Activated CD4-positive, alpha-beta memory T cell treated with anti-CD3 and anti-CD28 coated beads for 36 hours (primary cell): ENCODE measurements at regions of chr3 and their contacts with region 1.

Region 1: GRCh38 chr3:183468424-183468823 is 40.0 kb upstream of the MCF2L2 start:
- DNase-seq: no peak
- H3K4me3 Mint-ChIP-seq: no peak overlapping the region
- H3K27ac Mint-ChIP-seq: peak overlapping the region; percentile 79
- H3K4me1 Mint-ChIP-seq: peaks cover 20% of the 10 kb centered on the region
- H3K27me3 Mint-ChIP-seq: no peaks in the 10 kb centered on the region

Region 2: DNA sequence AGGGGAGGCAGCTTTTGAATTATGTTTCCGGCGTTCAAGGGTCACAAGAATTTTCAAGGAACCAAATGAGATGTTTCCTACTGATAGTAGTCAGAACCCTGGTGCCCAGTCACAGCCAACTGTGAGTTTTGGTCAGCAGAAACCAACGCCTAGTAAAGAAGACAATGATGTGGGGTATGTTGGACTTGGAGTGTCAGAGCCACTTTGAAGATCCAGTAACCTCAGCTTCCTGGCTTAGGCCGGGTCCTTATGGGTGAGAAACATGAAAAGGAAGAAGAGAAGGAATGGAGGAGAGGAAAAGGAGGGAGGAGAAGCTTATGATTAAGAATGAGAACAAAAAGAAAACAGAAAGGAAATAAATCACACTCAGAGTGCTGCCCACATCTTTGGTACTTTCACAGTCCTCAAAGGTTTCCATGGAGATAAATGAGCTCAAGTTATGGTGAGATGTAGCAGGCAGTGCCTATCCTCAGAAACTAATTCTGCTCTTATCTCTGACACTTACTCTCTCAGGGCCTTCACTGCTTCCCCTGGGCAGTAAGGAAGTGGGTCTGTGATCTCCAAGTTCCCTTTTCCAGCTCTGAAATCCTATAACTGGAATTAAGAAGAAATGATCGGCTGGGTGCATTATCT is 38.0 kb before region 1 on chr3:
- CTCF ChIA-PET with region 1: interaction called, 3 read pairs
- POLR2A ChIA-PET with region 1: interaction called, 7 read pairs
- intact Hi-C with region 1: loop called (anchors 1 kb)
- DNase-seq: peak; percentile 66
- H3K4me3 Mint-ChIP-seq: peak overlapping the region; percentile 1
- H3K27ac Mint-ChIP-seq: peak overlapping the region; percentile 43
- H3K4me1 Mint-ChIP-seq: peaks cover 53% of the 10 kb centered on the region
- H3K27me3 Mint-ChIP-seq: peaks cover 3% of the 10 kb centered on the region

Region 3: GRCh38 chr3:183481582-183481981 is 13.2 kb after region 1 on chr3:
- CTCF ChIA-PET with region 1: interaction called, 7 read pairs
- POLR2A ChIA-PET with region 1: no interaction called
- intact Hi-C with region 1: loop called (anchors 1 kb)
- DNase-seq: peak; percentile 49
- H3K4me3 Mint-ChIP-seq: no peak overlapping the region
- H3K27ac Mint-ChIP-seq: no peak overlapping the region
- H3K4me1 Mint-ChIP-seq: peaks cover 6% of the 10 kb centered on the region
- H3K27me3 Mint-ChIP-seq: no peaks in the 10 kb centered on the region

Region 4: DNA sequence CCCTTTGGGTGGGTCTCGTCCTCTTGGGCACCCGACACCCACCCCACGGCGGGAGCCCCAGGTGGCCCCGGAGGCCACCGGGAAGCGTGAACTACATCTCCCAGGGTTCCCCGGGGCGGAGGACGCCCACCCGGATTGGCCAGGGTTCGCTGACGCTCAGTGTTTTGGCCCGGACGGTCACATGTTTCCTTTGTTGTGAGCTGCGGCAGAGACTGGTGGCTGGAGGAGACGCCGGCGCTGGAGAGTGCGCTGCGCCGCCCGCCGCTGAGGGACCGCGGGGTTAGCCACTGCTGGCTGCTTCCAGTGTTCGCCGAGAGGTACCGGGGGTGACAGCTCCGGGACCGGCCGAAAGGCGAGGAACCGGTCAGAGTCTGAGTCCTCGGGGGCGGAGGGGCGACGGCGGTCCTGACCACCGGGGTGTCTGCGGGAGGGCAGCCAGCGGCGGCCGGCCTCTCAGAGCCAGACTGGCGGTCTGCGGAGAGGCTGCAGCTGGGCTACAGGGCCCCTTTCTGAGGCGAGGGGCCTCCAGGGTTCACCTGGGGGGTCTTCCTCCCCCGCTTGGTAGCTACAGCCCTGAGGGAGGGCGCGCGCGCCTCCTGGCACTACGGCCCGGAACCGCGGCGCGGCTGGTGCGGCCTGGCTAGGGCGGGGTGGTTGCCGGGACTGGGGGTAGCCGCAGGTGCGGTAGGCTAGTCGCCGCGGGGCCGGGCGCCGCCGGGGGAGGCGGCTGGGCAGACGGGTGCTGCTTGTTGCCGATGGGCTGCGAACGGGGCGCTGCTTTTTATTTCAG is 167.2 kb after region 1 on chr3 and contains the start of gene KLHL24:
- CTCF ChIA-PET with region 1: no interaction called
- POLR2A ChIA-PET with region 1: interaction called, 6 read pairs
- intact Hi-C with region 1: loop called (anchors 1 kb)
- DNase-seq: peak; percentile 95
- H3K4me3 Mint-ChIP-seq: peak within 1 kb of the TSS; percentile 92
- H3K27ac Mint-ChIP-seq: peak within 1 kb of the TSS; percentile 88
- H3K4me1 Mint-ChIP-seq: peaks cover 28% of the 10 kb centered on the region
- H3K27me3 Mint-ChIP-seq: no peaks in the 10 kb centered on the region
- total RNA-seq, gene KLHL24: 15.6 to 19.5 TPM

Region 5: DNA sequence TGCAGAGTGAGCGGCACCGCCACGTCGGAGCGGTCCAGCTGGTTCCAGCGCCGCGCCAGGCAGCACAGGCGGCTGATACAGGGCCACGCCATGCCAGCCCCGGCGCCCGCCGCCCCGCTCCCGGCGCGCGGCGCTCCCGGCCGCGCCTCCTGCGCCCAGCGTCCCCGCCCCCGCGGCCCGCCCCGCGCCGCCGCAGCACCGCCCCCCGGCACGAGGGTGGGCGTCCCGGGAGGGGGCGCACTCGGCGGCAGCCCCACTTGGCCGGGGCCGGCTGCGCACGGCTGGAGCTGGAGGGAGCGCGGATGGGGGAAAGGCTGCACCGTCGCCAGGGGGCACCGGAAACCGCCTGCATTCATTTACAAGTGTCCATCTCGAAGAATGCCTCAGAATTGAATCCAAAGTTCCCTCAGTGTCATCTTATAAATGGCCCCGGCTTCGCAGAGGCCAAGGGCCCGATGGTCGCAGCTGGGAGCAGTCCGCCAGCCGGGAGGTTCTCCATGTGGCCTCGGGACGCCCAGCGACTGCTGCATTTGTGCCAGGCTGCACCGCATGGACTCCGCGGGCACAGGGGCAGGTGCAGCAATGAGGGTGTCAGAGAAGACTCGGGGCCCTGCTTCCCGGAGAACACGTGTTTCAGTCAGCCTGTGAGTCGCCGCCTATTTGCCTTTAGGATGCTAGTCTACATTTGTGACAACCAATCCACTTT is 357.2 kb after region 1 on chr3 and contains the start of gene MAP6D1:
- CTCF ChIA-PET with region 1: no interaction called
- POLR2A ChIA-PET with region 1: no interaction called
- intact Hi-C with region 1: loop called (anchors 2 kb)
- DNase-seq: peak; percentile 56
- H3K4me3 Mint-ChIP-seq: peak within 1 kb of the TSS; percentile 68
- H3K27ac Mint-ChIP-seq: no peak within 1 kb of the TSS
- H3K4me1 Mint-ChIP-seq: peaks cover 12% of the 10 kb centered on the region
- H3K27me3 Mint-ChIP-seq: peaks cover 4% of the 10 kb centered on the region
- total RNA-seq, gene MAP6D1: 0.70 to 1.00 TPM